AG04450 (cell line): ENCODE measurements at regions of chr12 and their contacts with region 1.

Region 1: DNA sequence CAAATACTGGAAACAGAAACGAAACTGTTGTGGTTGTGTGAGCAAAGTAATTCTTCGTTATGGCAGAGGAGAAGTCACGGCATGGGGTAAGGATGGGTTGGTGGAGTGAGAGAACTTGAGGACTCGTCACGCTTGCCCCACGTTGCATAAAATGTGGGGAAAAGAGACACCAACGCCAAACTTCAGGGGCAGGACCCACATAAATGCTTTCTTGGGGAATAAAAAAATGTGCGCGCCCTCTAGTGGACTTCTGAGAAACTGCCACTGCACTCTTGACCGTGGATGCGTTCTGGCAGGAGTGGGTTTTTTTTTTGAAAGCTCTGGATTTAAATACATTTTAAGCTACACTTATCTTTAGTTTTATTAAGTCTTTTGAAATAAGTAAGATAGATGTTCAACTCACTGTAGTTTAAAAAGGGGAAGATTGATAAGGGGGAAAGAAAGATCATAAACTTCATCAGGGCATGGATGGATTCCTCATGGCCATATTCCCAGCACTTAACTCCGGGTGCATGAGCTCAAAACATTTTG is 4.1 kb upstream of the IGF1 start:
- DNase-seq: no peak
- H3K4me3 ChIP-seq: no peak overlapping the region
- H3K27ac ChIP-seq: no peak overlapping the region
- H3K27me3 ChIP-seq: no peaks in the 10 kb centered on the region
- CTCF ChIP-seq: peak; percentile 93

Region 2: DNA sequence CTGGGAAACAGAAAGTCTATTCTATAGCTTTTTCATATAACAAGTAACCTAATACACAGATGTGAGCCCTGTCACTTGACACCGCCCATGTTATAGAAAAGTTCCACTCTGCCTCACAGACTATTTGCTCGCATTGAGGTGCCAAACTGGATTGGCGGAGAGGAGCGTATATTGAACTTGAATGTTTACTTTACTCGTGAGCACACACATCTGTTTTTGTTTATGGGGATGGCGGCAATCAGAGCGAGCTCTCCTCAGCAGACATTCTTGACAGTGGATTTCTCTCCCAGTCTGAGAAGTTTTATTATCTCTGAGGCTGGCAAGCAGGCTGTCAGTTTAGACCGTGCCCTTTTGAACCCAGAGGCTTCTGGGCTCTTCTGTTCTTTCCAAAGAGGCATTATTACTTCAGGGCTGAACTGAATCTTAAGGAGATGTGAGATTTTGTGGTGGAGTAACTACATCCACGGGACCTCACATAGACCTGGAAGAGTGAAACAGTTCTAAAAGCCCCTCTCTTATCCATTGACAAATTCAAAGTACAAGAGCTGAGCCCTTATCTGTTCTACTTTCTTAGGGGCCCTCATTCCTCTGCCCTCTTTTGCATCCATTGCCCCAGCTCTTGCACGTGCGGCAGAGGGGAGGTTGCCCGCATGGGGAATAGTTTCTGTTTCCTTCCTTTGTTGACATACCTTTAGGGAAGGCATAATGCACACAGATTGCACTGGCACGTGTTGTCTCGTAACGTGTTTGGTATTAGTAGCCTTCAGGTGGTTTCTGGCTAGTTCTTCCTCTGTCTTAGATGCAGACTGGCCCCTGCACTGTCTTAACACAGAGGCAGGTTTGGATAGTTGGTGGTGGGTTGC is 538.9 kb before region 1 on chr12:
- CTCF ChIA-PET with region 1: interaction called, 34 read pairs
- POLR2A ChIA-PET with region 1: no interaction called
- DNase-seq: peak; percentile 27
- H3K4me3 ChIP-seq: no peak overlapping the region
- H3K27ac ChIP-seq: peak overlapping the region; percentile 53
- H3K27me3 ChIP-seq: no peaks in the 10 kb centered on the region
- CTCF ChIP-seq: no peak

Region 3: GRCh38 chr12:102005256-102005655 is 479.2 kb before region 1 on chr12:
- CTCF ChIA-PET with region 1: no interaction called
- POLR2A ChIA-PET with region 1: no interaction called
- DNase-seq: no peak
- H3K4me3 ChIP-seq: no peak overlapping the region
- H3K27ac ChIP-seq: no peak overlapping the region
- H3K27me3 ChIP-seq: no peaks in the 10 kb centered on the region
- CTCF ChIP-seq: no peak

Region 4: GRCh38 chr12:102300824-102301461 is 183.6 kb before region 1 on chr12:
- CTCF ChIA-PET with region 1: interaction called, 28 read pairs
- POLR2A ChIA-PET with region 1: no interaction called
- DNase-seq: no peak
- H3K4me3 ChIP-seq: no peak overlapping the region
- H3K27ac ChIP-seq: no peak overlapping the region
- H3K27me3 ChIP-seq: no peaks in the 10 kb centered on the region
- CTCF ChIP-seq: peak; percentile 62

Region 5: GRCh38 chr12:102503056-102503681 is 18.7 kb after region 1 on chr12:
- CTCF ChIA-PET with region 1: interaction called, 33 read pairs
- POLR2A ChIA-PET with region 1: no interaction called
- DNase-seq: no peak
- H3K4me3 ChIP-seq: no peak overlapping the region
- H3K27ac ChIP-seq: no peak overlapping the region
- H3K27me3 ChIP-seq: no peaks in the 10 kb centered on the region
- CTCF ChIP-seq: no peak

Region 6: GRCh38 chr12:102592134-102592533 is 107.6 kb after region 1 on chr12:
- CTCF ChIA-PET with region 1: interaction called, 10 read pairs
- POLR2A ChIA-PET with region 1: no interaction called
- DNase-seq: no peak
- H3K4me3 ChIP-seq: no peak overlapping the region
- H3K27ac ChIP-seq: no peak overlapping the region
- H3K27me3 ChIP-seq: no peaks in the 10 kb centered on the region
- CTCF ChIP-seq: no peak